Activated CD4-positive, alpha-beta T cell treated with anti-CD3 and anti-CD28 coated beads, Interleukin-2, amount 10 ng/mL, durations not matched to agents 7 days and 5 days (primary cell): ENCODE measurements at regions of chr5 and their contacts with region 1.

Region 1: DNA sequence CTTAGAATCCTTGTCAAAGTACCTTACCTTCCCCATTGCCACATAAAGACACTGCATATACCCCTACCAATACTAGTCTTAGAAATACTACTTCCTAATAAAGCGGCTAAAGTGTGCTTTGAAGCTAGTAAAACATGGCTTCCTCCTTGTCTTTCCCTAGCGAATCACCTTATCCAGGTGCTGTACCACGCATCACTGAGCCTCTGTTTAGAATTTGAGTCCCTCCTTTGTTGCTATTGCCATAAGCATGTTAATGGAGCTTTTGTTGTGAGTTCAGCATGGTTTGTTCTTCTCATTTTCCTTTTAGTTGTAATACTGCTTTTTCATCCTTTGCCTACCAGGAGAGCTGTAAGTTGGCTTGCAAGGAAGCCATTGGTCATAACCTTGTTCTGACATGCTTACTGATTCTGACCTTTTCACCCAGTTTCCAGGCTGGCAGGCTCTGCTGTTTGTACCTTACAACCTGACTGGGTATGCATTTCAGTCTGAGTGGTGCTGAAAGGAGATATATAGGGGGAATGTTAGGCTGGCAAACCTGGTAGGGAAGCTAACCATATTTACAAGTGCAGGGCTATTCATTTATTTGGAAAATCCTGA is 49.8 kb downstream of the LMNB1 start:
- DNase-seq: no peak
- H3K4me3 Mint-ChIP-seq: no peak overlapping the region
- H3K27ac Mint-ChIP-seq: no peak overlapping the region
- H3K4me1 Mint-ChIP-seq: no peaks in the 10 kb centered on the region
- H3K27me3 Mint-ChIP-seq: no peaks in the 10 kb centered on the region

Region 2: DNA sequence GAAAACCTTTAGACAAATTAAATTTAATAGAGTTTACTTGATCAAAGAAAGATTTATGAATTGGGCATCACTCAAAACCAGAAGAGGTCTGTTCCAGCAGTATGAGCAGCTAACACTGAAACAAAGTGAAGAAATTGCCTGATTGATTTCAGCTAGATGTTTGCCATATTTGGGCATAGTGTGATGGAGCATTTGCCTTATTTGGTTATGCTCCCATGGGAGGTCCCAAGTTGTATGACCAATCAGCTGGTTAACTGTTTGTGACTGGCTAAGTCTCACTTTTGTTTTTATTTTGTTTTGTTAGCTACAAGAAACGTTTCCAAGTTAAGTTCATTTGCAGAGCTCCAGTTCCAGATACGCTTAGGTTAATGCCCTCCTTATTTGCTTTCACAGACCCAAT is 103.1 kb before region 1 on chr5:
- CTCF ChIA-PET with region 1: no interaction called
- POLR2A ChIA-PET with region 1: no interaction called
- DNase-seq: no peak
- H3K4me3 Mint-ChIP-seq: no peak overlapping the region
- H3K27ac Mint-ChIP-seq: no peak overlapping the region
- H3K4me1 Mint-ChIP-seq: no peaks in the 10 kb centered on the region
- H3K27me3 Mint-ChIP-seq: no peaks in the 10 kb centered on the region

Region 3: GRCh38 chr5:126837906-126838539 is 11.3 kb after region 1 on chr5:
- CTCF ChIA-PET with region 1: interaction called, 14 read pairs
- POLR2A ChIA-PET with region 1: no interaction called
- DNase-seq: no peak
- H3K4me3 Mint-ChIP-seq: no peak overlapping the region
- H3K27ac Mint-ChIP-seq: no peak overlapping the region
- H3K4me1 Mint-ChIP-seq: peaks cover 13% of the 10 kb centered on the region
- H3K27me3 Mint-ChIP-seq: no peaks in the 10 kb centered on the region

Region 4: GRCh38 chr5:126988021-126988569 is 161.4 kb after region 1 on chr5:
- CTCF ChIA-PET with region 1: no interaction called
- POLR2A ChIA-PET with region 1: no interaction called
- DNase-seq: peak; percentile 33
- H3K4me3 Mint-ChIP-seq: peak overlapping the region; percentile 33
- H3K27ac Mint-ChIP-seq: peak overlapping the region; percentile 85
- H3K4me1 Mint-ChIP-seq: peaks cover 19% of the 10 kb centered on the region
- H3K27me3 Mint-ChIP-seq: no peaks in the 10 kb centered on the region